ENCODE measurements at regions of chr2 and their contacts with region 1.

Region 1: GRCh38 chr2:10434886-10435819 is 13.0 kb downstream of the ODC1 start:
- DNase-seq: peak; percentile 91
- ATAC-seq: peak; percentile 82

Region 2: DNA sequence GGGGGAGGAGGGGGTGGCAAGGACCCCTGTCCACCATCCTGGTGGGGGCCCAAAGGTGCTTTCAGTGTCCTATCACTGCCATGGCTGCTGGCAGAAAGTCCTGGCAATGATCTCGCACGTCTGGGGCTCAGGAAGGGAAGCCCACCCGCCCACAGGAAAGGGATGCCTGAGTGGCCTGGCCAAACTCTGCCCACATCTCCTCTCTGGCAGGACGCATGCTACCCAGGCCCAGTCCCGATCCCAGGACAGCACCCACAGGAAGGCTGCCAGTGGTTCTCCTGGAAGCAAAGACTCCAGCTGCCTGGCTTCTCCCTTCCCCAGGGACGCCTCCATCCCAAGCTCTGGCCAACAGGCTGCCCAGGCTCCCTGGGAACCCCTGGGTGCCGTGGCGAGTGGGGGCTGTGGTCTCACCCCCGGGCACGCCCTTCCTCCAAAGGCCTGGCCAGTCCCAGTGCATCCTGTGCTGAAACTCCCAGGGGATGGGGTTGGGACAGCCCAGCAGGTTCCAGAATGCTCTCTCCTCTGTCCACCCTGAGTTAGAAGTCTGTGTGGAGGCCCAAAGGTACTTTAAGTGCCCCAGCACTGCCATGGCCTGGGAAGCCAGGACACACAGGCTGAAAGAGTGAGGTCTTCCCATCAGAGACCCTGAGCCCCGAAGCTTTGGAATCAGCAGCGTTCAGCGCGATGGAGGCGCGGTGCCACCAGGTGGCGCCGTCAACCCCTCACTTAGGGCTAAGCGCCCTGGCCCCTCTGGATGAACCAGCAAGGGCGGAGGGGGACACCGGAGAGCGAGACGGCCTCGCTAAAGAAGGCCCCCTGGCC is 621.6 kb before region 1 on chr2:
- intact Hi-C with region 1: loop called (anchors 10 kb)
- DNase-seq: no peak
- ATAC-seq: peak; percentile 79

Region 3: GRCh38 chr2:10072656-10073480 is 362.3 kb before region 1 on chr2:
- intact Hi-C with region 1: loop called (anchors 2 kb)
- DNase-seq: peak; percentile 81
- ATAC-seq: peak; percentile 89

Region 4: GRCh38 chr2:10122386-10123280 is 312.5 kb before region 1 on chr2 and contains the start of gene RRM2:
- intact Hi-C with region 1: loop called (anchors 1 kb)
- DNase-seq: peak; percentile 96
- ATAC-seq: peak; percentile 92
- total RNA-seq, gene RRM2: 4.2 TPM

Region 5: DNA sequence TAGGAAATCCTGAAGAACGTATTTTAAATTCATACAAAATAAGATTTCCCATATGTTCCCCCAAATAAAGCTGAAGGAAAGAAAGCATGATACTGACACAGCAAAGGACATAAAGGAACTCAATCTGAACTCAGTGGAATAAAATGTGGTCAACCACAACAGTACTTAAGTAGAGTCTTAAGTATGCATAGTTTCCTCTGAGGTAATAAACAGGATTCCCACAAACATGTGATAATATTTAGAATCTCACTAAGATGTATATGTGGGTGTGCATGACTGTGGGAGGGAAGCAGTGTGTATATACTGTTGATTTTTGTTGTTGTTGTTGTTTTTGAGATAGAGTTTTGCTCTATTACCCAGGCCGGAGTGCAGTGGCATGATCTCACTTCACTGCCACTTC is 185.3 kb after region 1 on chr2:
- intact Hi-C with region 1: no loop called
- DNase-seq: no peak
- ATAC-seq: no peak

Measured in Right ventricle myocardium inferior (tissue), 1 donor.